ENCODE measurements at regions of chr1 and their contacts with region 1.

Region 1: DNA sequence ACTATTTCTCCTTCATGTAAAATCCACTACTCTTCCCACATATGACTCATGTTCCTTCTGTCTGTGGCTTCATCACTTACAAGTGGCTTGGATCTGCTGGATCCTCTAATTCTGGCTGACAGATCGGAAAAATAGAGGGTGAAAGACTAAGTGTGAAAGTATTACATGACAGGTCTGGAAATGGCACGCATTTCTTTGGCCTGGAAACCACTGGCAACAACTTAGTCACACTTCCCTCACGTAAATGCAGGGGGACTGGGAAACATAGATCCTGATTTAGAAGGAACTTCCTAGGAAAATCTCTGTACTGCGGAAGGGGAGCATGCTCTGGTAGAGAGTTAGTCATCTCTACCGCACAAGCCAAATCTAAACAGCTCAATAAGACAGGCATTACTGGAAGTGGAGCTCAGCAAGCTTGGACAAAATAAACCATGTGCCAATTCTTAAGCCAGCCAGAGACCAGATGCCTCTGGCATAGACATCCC is 305.4 kb upstream of the PTBP2 start:
- DNase-seq: peak; percentile 97
- H3K4me3 ChIP-seq: no peak overlapping the region
- H3K27ac ChIP-seq: peak overlapping the region; percentile 69
- H3K4me1 ChIP-seq: peaks cover 11% of the 10 kb centered on the region
- H3K27me3 ChIP-seq: no peaks in the 10 kb centered on the region
- CTCF ChIP-seq: no peak

Region 2: DNA sequence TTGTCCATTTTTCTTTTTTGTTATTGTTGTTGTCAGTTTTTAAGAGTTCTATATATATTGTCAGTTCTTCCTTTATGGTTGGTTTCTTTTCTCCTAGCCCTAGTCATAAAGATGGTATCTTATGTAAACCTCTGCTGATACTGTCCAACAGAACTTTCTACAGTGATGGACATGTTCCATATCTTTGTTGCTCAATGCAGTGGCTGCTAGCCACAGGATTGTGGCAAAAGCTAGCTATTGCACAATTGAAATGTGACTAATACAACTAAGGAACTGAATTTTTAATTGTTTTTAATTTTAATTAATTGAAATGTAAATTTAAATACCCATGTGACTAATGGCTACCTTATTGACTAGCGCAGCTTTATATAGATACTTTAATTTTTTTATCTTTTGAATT is 106.4 kb before region 1 on chr1:
- CTCF ChIA-PET with region 1: no interaction called
- dilution Hi-C with region 1: no loop called
- in situ Hi-C with region 1: no loop called
- intact Hi-C with region 1: loop called (anchors 5 kb)
- DNase-seq: peak; percentile 81
- H3K4me3 ChIP-seq: no peak overlapping the region
- H3K27ac ChIP-seq: peak overlapping the region; percentile 40
- H3K4me1 ChIP-seq: peaks cover 22% of the 10 kb centered on the region
- H3K27me3 ChIP-seq: no peaks in the 10 kb centered on the region
- CTCF ChIP-seq: no peak

Region 3: DNA sequence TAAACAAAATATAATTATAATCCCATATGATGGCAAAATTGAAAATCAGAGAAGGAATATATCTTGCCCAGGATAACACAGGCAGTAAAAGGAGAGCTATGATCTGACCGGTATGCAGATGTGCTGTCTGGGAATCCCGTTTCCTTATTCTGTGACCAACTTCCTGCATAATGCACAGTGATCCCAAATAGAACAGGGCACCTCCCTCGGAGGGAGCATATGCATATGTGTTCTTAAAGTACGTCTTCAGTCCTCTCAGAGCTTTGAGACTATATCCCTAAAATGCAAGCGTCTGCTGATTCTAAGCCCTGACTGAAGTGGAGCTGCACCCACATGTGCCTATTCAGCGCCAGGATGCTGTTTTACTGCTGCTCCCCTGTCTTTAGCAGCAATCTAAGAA is 60.6 kb before region 1 on chr1:
- CTCF ChIA-PET with region 1: no interaction called
- dilution Hi-C with region 1: no loop called
- in situ Hi-C with region 1: loop called in 1 of 2 experiments (anchors 10 kb)
- intact Hi-C with region 1: no loop called
- DNase-seq: no peak
- H3K4me3 ChIP-seq: no peak overlapping the region
- H3K27ac ChIP-seq: no peak overlapping the region
- H3K4me1 ChIP-seq: peaks cover 11% of the 10 kb centered on the region
- H3K27me3 ChIP-seq: no peaks in the 10 kb centered on the region
- CTCF ChIP-seq: no peak

Region 4: GRCh38 chr1:96559707-96560596 is 143.8 kb after region 1 on chr1:
- CTCF ChIA-PET with region 1: no interaction called
- dilution Hi-C with region 1: no loop called
- in situ Hi-C with region 1: no loop called
- intact Hi-C with region 1: loop called (anchors 1 kb)
- DNase-seq: peak; percentile 99
- H3K4me3 ChIP-seq: no peak overlapping the region
- H3K27ac ChIP-seq: peak overlapping the region; percentile 88
- H3K4me1 ChIP-seq: peaks cover 17% of the 10 kb centered on the region
- H3K27me3 ChIP-seq: no peaks in the 10 kb centered on the region
- CTCF ChIP-seq: no peak

Region 5: DNA sequence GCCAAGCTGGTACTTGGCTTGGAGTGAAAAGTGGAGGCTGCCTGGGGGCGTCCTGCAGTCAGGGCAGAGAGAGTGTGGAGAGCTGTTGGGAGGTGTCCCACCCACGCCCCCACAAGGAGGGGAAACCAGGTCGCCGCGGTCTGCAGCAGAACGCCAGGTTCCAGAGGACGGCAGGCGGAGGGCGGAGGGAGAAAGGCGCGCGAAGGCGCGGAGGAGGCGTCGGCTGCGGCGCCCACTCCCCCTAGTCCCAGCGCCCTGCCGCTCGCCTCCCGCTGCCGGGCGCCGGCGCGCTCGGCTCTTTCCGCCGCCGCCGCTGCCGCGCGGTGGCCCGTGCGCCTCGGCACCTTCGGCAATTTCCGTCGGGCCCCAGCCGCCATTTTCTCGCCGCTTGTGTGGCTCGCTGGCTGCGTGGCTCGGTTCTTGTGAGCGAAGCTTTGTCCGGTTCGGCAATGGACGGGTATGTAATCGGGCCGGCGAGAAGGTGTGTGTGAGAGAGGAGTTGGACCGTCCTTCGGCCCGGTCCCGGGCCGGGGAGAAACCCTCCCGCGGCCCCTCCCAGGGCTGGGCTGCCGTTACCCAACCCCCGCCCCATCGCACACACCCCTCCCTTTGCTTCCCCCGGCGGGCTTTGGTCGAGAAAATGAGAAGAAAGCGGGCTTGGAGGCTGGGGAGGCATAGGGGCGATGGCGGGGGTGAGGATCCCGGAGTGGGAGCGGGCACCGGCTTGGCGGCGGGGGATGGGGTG is 305.4 kb after region 1 on chr1 and contains the start of gene PTBP2:
- CTCF ChIA-PET with region 1: no interaction called
- dilution Hi-C with region 1: no loop called
- in situ Hi-C with region 1: no loop called
- intact Hi-C with region 1: loop called (anchors 5 kb)
- DNase-seq: peak; percentile 71
- H3K4me3 ChIP-seq: peak within 1 kb of the TSS; percentile 82 to 98 (median 91)
- H3K27ac ChIP-seq: peak within 1 kb of the TSS; percentile 60
- H3K4me1 ChIP-seq: no peaks in the 10 kb centered on the region
- H3K27me3 ChIP-seq: no peaks in the 10 kb centered on the region
- CTCF ChIP-seq: no peak
- total RNA-seq, gene PTBP2: 13.0 to 13.6 TPM

Measured in mammary epithelial cell (primary cell).